Heart left ventricle (tissue), 16 donors: ENCODE measurements at regions of chr5 and their contacts with region 1.

Region 1: GRCh38 chr5:68446487-68446894 is 230.9 kb downstream of the PIK3R1 start:
- DNase-seq: no peak
- ATAC-seq: no peak
- H3K4me3 ChIP-seq: no peak overlapping the region
- H3K27ac ChIP-seq: no peak overlapping the region
- H3K4me1 ChIP-seq: peaks cover 0 to 24% (median 11%) of the 10 kb centered on the region in 12 donors
- H3K27me3 ChIP-seq: no peaks in the 10 kb centered on the region
- CTCF ChIP-seq: no peak
- POLR2A ChIP-seq: no peak

Region 2: DNA sequence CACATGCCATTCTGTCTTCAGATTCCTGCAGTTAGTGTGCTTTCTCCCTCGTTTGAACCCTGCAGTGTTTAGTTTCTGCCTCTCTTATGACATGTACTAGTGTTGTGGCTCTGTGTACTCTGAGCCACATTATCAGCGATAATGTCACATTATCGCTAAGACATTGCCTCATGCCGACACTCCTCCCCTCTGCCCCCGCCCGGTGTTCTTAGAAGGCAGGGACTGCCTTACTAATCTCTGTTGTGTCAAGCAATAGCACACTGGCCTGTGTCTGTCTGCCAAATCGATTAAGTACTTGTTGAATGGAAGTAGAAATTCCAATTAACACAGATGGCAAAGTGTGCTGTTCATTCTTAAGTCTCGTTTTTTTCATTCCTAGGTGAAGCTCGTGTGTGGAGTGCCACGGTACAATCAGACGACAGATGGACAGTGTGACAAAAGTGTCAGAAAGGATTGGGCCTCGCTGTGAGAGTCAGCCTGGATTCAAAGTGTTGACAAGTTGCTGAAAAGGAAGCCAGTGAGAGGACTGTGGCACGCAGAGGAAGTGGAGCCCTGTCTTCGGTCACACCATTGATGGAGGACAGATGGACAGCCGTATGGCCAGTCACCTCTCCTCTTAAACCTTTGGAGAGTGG is 220.5 kb before region 1 on chr5:
- intact Hi-C with region 1: no loop called
- DNase-seq: peak in 3 of 5 donors; percentile 46 to 76 (median 60)
- ATAC-seq: peak; percentile 62 to 86 (median 75)
- H3K4me3 ChIP-seq: peak overlapping the region in 5 of 12 donors; percentile 0 to 13 (median 10)
- H3K27ac ChIP-seq: peak overlapping the region; percentile 6 to 75 (median 58)
- H3K4me1 ChIP-seq: peaks cover 8 to 97% (median 91%) of the 10 kb centered on the region in 12 donors
- H3K27me3 ChIP-seq: no peaks in the 10 kb centered on the region
- CTCF ChIP-seq: no peak
- POLR2A ChIP-seq: no peak

Region 3: GRCh38 chr5:68343421-68343826 is 103.1 kb before region 1 on chr5:
- intact Hi-C with region 1: loop called in 1 of 10 experiments (anchors 10 kb)
- DNase-seq: peak in 4 of 5 donors; percentile 36 to 87 (median 46)
- ATAC-seq: peak; percentile 93 to 97 (median 96)
- H3K4me3 ChIP-seq: no peak overlapping the region
- H3K27ac ChIP-seq: peak overlapping the region; percentile 31 to 70 (median 58)
- H3K4me1 ChIP-seq: peaks cover 0 to 33% (median 5%) of the 10 kb centered on the region in 12 donors
- H3K27me3 ChIP-seq: no peaks in the 10 kb centered on the region
- CTCF ChIP-seq: no peak
- POLR2A ChIP-seq: no peak